KBM-7 (cell line): ENCODE measurements at regions of chr6 and their contacts with region 1.

Region 1: DNA sequence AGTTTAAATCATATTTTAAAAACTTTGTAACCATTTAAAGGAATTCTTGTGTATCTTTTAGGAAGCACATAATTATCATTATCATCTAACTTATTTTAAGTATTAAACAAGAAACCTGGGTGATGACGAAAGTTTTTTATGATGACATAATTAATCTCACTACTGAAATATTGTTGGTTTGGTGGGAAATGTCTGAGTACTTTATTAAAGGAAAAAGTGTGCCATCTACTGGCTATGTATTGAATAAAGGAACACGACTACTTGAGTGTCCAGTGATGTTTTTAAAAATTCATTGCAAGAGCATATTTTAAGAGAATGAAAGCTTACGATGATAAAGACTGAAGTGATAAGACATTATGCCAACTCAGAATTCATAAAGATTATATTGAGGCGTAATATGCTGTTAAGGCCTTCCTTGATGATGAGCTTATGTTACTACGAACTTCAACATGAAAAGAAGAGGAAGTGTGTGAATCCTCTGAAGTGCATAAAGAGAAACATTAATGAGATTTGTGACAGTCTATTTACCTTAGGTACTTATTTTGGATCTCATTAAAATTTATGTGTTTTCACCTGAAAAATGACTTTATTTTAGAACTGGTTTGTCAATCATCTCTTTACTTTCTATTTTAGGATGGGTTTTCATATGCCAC is 12.0 kb upstream of the TRMT11 start:
- DNase-seq: peak; percentile 85

Region 2: DNA sequence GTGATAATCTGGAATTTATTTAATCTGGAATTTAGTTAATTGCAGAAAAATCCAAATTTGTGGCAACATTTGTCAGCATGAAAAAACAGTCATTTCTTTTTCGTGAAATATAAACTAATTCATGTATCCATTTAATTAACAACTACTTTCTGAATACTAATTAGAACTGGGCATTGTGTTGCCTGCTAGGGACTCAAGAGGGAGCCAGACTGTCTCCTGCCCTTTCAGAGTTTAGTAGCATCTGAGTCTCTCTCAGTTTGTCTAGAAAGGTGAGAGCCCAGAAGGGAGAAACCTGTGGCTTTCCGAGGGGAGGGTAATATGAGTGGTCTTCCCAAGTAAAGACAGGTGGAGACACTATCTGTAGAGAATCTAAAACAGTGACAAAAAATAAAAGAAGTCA is 461.7 kb before region 1 on chr6:
- in situ Hi-C with region 1: no loop called
- DNase-seq: no peak

Region 3: GRCh38 chr6:125742466-125743120 is 231.7 kb before region 1 on chr6:
- in situ Hi-C with region 1: no loop called
- DNase-seq: no peak

Region 4: DNA sequence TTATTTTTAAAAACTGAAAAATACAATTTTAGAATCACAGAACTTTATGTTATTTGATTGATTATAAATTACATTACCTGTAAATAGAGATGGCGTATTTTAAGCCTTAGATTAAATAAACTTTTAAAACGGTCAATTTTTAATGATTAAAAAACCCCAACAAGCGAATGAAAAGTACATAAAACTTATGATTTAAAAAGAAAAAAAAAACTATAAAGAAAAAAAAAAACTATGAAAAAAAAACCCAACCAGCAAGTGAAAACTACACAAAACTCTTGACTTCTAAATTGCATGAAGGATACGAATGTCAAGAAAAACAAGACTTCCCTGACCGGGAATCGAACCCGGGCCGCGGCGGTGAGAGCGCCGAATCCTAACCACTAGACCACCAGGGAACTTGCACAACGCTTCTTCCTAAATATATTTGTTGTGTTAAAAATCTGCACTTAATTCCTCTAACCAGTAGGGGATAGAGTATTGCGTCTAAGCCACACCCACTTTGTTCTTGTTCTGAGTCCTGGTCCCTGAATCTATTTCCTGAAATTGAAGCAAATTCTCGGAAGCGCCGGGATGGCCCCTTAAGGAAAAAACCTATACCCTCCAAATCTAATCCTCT is 194.3 kb before region 1 on chr6:
- in situ Hi-C with region 1: loop called (anchors 10 kb)
- DNase-seq: peak; percentile 99